Activated CD4-positive, alpha-beta memory T cell treated with anti-CD3 and anti-CD28 coated beads for 36 hours (primary cell): ENCODE measurements at regions of chr2 and their contacts with region 1.

Region 1: DNA sequence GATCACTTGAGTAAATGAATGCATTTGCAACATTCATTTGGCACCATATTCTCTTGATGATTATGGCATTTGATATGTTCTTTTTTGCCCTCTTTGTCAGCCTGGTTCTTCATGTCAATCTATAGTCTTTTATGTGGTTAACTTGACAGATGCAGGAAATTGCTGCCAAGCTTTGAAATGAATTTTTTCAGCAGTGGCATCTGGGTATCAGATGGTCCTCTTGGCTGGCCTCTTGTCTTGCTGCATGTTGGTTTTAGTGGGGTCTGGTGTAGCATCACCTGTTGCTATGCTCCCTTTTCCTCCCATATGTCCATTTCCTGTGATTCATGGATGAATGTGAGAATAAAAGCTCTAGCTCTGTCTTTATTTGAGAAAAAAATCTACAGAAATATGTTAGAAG is 119.9 kb downstream of the DPP4 start:
- DNase-seq: no peak
- H3K4me3 Mint-ChIP-seq: no peak overlapping the region
- H3K27ac Mint-ChIP-seq: peak overlapping the region; percentile 83
- H3K4me1 Mint-ChIP-seq: peaks cover 56% of the 10 kb centered on the region
- H3K27me3 Mint-ChIP-seq: no peaks in the 10 kb centered on the region

Region 2: GRCh38 chr2:161308178-161308955 is 645.7 kb before region 1 on chr2 and contains the start of gene PSMD14:
- CTCF ChIA-PET with region 1: no interaction called
- POLR2A ChIA-PET with region 1: no interaction called
- intact Hi-C with region 1: loop called (anchors 2 kb)
- DNase-seq: peak; percentile 96
- H3K4me3 Mint-ChIP-seq: peak within 1 kb of the TSS; percentile 91
- H3K27ac Mint-ChIP-seq: peak within 1 kb of the TSS; percentile 92
- H3K4me1 Mint-ChIP-seq: peaks cover 37% of the 10 kb centered on the region
- H3K27me3 Mint-ChIP-seq: no peaks in the 10 kb centered on the region
- total RNA-seq, gene PSMD14: 84.2 to 89.8 TPM

Region 3: GRCh38 chr2:161631855-161632391 is 322.2 kb before region 1 on chr2:
- CTCF ChIA-PET with region 1: no interaction called
- POLR2A ChIA-PET with region 1: no interaction called
- intact Hi-C with region 1: no loop called
- DNase-seq: no peak
- H3K4me3 Mint-ChIP-seq: no peak overlapping the region
- H3K27ac Mint-ChIP-seq: no peak overlapping the region
- H3K4me1 Mint-ChIP-seq: no peaks in the 10 kb centered on the region
- H3K27me3 Mint-ChIP-seq: peaks cover 4% of the 10 kb centered on the region

Region 4: DNA sequence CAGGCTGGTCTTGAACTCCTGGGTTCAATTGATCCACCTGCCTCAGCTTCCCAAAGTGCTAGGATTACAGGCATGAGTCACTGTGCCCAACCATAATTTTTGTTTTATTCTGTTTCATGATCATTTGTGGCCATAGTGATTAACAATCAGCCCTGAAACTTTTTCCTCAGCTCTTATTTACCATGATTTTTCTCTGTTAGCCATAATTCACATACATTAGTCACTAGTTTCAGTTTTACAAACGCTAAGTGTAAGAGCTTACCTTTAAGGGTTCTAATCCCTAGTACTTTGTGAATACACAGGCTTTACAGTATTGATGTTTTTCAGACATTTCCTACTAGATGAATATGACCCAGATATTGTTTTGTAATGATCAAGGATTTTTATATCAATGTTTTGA is 96.2 kb before region 1 on chr2:
- CTCF ChIA-PET with region 1: interaction called, 3 read pairs
- POLR2A ChIA-PET with region 1: no interaction called
- intact Hi-C with region 1: loop called (anchors 2 kb)
- DNase-seq: no peak
- H3K4me3 Mint-ChIP-seq: no peak overlapping the region
- H3K27ac Mint-ChIP-seq: no peak overlapping the region
- H3K4me1 Mint-ChIP-seq: peaks cover 4% of the 10 kb centered on the region
- H3K27me3 Mint-ChIP-seq: no peaks in the 10 kb centered on the region

Region 5: GRCh38 chr2:161992526-161992925 is 38.4 kb after region 1 on chr2:
- CTCF ChIA-PET with region 1: interaction called, 14 read pairs
- POLR2A ChIA-PET with region 1: interaction called, 5 read pairs
- intact Hi-C with region 1: loop called (anchors 1 kb)
- DNase-seq: peak; percentile 77
- H3K4me3 Mint-ChIP-seq: peak overlapping the region; percentile 73
- H3K27ac Mint-ChIP-seq: peak overlapping the region; percentile 92
- H3K4me1 Mint-ChIP-seq: peaks cover 61% of the 10 kb centered on the region
- H3K27me3 Mint-ChIP-seq: no peaks in the 10 kb centered on the region

Region 6: GRCh38 chr2:162073888-162074645 is 120.0 kb after region 1 on chr2 and contains the start of gene DPP4:
- CTCF ChIA-PET with region 1: interaction called, 8 read pairs
- POLR2A ChIA-PET with region 1: no interaction called
- intact Hi-C with region 1: loop called (anchors 1 kb)
- DNase-seq: peak; percentile 69
- H3K4me3 Mint-ChIP-seq: peak within 1 kb of the TSS; percentile 90
- H3K27ac Mint-ChIP-seq: peak within 1 kb of the TSS; percentile 82
- H3K4me1 Mint-ChIP-seq: peaks cover 52% of the 10 kb centered on the region
- H3K27me3 Mint-ChIP-seq: no peaks in the 10 kb centered on the region
- total RNA-seq, gene DPP4: 29.9 to 30.7 TPM